ENCODE measurements at regions of chr1 and their contacts with region 1.

Region 1: DNA sequence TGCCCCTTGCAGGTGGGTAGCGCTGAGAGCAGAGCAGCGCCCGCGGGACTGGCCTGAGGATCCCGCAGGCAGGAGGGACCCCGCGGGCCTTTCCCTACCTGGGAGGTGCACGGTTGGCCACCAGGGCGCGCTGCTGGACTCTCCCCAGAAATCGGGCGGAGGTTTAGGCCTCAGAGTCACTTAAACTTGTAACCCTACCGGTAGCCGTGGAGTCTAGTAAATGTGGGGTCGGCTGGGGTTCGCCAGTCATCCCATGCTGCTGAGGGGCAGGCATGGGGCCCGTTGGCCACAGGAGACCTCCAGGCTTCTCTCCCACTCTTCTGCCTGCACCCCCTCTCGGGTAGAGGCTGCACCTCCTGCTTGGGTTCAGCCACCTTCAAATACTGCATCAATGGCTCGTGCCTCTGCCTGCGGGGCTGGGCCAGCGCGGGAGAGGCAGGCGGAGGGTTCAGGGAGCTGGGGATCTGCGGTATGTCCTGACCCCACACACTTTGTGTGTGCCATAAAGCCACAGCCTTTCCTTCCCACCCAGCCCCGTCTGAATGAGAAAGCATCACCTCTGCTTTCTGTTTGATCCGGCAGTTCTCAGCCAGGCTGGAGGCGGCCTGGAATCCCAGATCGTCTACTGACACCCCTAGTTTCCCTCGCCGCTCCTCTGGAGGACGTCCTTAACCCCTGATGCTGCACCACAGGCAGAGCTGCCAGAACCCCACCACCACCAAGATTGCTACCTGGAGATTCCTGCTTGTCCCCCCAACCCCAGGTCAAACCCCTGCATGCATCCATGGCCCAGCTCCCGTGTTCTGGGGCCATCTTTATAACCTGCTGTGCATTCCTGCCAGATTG is 12.3 kb upstream of the GSTM4 start:
- DNase-seq: peak; percentile 81
- H3K4me3 Mint-ChIP-seq: no peak overlapping the region
- H3K27ac Mint-ChIP-seq: no peak overlapping the region
- H3K4me1 Mint-ChIP-seq: peaks cover 22% of the 10 kb centered on the region
- H3K27me3 Mint-ChIP-seq: peaks cover 4% of the 10 kb centered on the region

Region 2: DNA sequence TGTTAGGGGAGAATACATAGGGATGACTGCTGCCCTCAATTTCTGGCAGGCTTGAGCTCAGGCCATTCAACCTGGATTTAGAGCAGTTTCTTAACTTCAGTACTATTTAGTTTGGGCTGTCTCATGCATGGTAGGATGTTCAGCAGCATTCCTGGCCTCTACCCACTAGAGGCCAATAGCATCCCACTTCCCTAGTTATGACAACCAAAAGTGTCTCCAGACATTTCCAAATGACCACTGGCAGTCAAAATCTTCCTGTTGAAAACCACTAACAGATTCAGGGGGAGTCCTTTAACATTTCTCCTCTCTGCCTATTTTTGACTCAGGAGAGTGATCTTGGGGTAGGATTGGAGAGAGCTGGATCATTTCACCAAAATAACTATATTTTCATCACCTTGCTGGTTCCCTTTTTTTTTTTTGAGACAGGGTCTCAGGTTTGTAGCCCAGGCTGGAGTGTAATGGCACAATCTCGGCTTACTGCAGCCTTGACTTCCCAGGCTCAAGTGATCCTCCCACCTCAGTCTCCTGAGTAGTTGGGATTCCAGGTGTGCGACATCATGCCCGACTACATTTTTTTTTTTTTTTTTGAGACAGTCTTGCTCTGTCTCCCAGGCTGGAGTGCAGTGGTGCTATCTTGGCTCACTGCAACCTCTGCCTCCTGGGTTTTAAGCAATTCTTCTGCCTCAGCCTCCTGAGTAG is 32.9 kb before region 1 on chr1:
- intact Hi-C with region 1: no loop called
- DNase-seq: no peak
- H3K4me3 Mint-ChIP-seq: no peak overlapping the region
- H3K27ac Mint-ChIP-seq: no peak overlapping the region
- H3K4me1 Mint-ChIP-seq: no peaks in the 10 kb centered on the region
- H3K27me3 Mint-ChIP-seq: peaks cover 15% of the 10 kb centered on the region

Region 3: GRCh38 chr1:109655601-109656519 is 12.3 kb after region 1 on chr1 and contains the start of gene GSTM4:
- intact Hi-C with region 1: loop called (anchors 2 kb)
- DNase-seq: peak; percentile 62
- H3K4me3 Mint-ChIP-seq: peak within 1 kb of the TSS; percentile 92
- H3K27ac Mint-ChIP-seq: peak within 1 kb of the TSS; percentile 86
- H3K4me1 Mint-ChIP-seq: peaks cover 10% of the 10 kb centered on the region
- H3K27me3 Mint-ChIP-seq: peaks cover 21% of the 10 kb centered on the region
- total RNA-seq, gene GSTM4: 13.6 and 13.9 TPM in 2 replicates

Region 4: DNA sequence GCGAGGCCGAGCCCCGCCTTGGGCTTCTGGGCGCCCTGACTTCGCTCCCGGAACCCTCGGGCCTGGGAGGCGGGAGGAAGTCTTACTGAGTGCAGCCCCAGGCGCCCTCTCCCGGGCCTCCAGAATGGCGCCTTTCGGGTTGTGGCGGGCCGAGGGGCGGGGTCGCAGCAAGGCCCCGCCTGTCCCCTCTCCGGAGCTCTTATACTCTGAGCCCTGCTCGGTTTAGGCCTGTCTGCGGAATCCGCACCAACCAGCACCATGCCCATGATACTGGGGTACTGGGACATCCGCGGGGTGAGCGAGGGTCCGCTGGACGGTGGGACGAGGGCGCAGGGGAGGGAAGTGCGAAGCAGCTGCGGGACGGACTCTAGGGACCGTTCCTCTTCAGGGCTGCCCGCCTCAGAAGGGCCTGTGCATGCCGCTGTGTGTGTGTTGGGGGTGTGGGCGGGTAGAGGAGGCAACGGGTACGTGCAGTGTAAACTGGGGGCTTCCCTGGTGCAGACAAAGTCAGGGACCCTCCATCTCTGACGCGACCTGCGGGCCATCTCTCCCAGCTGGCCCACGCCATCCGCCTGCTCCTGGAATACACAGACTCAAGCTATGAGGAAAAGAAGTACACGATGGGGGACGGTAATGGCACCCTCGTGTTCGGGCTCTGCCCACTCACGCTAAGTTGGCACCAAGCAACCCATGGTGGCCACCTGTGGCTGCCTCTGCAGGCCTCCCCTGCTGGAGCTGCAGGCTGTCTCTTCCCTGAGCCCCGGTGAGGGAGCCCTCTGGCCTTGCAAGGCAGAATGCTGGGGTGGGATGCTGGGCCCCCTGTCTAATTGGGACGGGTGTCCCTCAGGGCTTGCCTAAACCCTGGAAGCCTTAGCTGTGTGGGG is 44.2 kb after region 1 on chr1 and contains the start of gene GSTM1:
- intact Hi-C with region 1: loop called (anchors 2 kb)
- DNase-seq: peak; percentile 85
- H3K4me3 Mint-ChIP-seq: peak within 1 kb of the TSS; percentile 86
- H3K27ac Mint-ChIP-seq: peak within 1 kb of the TSS; percentile 94
- H3K4me1 Mint-ChIP-seq: peaks cover 11% of the 10 kb centered on the region
- H3K27me3 Mint-ChIP-seq: no peaks in the 10 kb centered on the region
- total RNA-seq, gene GSTM1: 112 and 113 TPM in 2 replicates

Region 5: DNA sequence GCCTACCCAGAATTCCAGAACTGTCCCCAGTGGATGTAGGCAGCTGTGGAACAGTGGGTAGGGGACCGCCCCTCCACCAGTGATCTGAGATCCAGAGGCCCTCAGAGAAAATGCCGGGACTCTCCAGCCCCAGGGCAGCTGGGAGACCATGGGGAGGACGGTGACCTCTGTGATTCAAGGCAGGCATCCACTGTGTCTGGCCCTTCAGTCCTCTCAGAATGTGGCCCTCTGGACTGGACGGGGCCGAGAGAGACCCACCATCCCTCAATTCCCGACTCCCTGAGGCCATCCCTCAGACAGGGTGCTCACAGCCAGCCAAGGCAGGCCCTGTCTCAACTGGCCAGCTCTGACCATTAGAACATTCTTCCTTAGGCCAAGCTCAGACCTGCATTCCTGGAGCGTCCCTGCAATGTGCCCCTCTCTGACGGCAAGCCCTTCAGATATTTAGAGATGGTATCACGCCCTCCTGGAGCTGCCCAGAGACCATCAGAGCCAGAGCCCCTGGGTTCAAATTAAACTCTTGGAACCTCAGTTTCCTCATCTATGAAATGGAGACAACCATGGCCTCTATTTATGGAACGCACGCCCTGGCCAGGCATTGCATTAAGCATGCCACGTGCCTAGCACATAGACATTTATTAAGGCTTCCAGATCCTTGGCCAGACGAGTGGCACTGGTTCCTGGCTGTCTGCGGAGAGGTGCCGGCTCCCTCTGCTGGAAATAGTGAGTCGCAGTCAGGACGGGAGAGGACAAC is 129.7 kb after region 1 on chr1:
- intact Hi-C with region 1: loop called (anchors 1 kb)
- DNase-seq: peak; percentile 65
- H3K4me3 Mint-ChIP-seq: no peak overlapping the region
- H3K27ac Mint-ChIP-seq: no peak overlapping the region
- H3K4me1 Mint-ChIP-seq: peaks cover 23% of the 10 kb centered on the region
- H3K27me3 Mint-ChIP-seq: peaks cover 5% of the 10 kb centered on the region

Region 6: GRCh38 chr1:109984456-109985275 is 341.1 kb after region 1 on chr1 and contains the start of gene AHCYL1:
- intact Hi-C with region 1: loop called (anchors 1 kb)
- DNase-seq: peak; percentile 99
- H3K4me3 Mint-ChIP-seq: peak within 1 kb of the TSS; percentile 97
- H3K27ac Mint-ChIP-seq: peak within 1 kb of the TSS; percentile 97
- H3K4me1 Mint-ChIP-seq: peaks cover 42% of the 10 kb centered on the region
- H3K27me3 Mint-ChIP-seq: no peaks in the 10 kb centered on the region
- total RNA-seq, gene AHCYL1: 85.8 and 86.5 TPM in 2 replicates

Measured in activated T-helper 2 cell treated with anti-CD3 and anti-CD28 coated beads, Interferon-gamma antibody, Interleukin-2, Interleukin-4, amounts not matched to agents 10 μg/mL and 5 μg/mL and 100 μg/mL, durations not matched to agents 14 hours and 24 hours and 36 hours (primary cell).